Psoas muscle (tissue), 8 donors: ENCODE measurements at regions of chr1 and their contacts with region 1.

Region 1: GRCh38 chr1:210301615-210302000 is 27.1 kb upstream of the HHAT start:
- DNase-seq: no peak
- ATAC-seq: peak in 3 of 4 donors; percentile 60 to 72 (median 68)
- H3K4me3 ChIP-seq: no peak overlapping the region
- H3K27ac ChIP-seq: no peak overlapping the region
- H3K4me1 ChIP-seq: peaks cover 16% of the 10 kb centered on the region
- H3K27me3 ChIP-seq: no peaks in the 10 kb centered on the region
- CTCF ChIP-seq: no peak

Region 2: DNA sequence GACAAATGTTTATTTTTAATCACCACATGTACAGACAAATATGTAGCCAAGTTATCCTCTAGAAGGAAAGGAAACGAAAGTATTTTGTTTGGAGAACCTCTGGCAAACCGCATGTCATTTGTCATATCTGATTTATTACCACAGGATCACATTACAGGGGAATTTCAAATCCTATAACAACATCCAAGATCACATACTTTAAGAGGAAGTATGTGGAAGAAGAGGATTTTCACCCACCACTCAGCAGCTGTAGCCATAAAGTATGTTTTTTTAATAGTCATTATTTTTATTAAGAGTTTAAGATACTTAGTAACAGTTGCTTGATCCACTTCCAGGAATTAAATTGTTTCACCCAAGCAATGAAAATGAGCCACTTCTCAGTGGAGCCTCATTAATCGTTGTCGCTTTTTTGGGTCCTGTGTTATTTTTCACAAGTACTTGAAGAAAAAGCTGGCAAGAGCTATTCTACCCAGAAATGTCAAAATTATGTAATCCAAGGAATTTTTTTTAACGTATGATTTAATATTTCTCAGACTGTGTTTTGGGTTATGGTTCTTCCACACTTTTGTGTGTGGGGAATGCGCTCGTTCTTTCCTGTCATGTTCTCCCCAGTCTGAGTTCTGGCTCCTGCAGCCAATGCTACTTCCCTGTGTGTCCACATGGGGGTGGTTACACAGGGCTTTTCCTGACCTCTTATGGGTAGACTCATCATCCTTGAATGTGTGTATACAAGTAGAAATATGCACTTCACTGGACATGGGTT is 62.1 kb before region 1 on chr1:
- intact Hi-C with region 1: loop called in 1 of 2 experiments (anchors 5 kb)
- DNase-seq: no peak
- ATAC-seq: peak in 1 of 4 donors; percentile 63
- H3K4me3 ChIP-seq: no peak overlapping the region
- H3K27ac ChIP-seq: no peak overlapping the region
- H3K4me1 ChIP-seq: no peaks in the 10 kb centered on the region
- H3K27me3 ChIP-seq: peaks cover 0 to 33% (median 4%) of the 10 kb centered on the region in 3 donors
- CTCF ChIP-seq: peak; percentile 38

Region 3: DNA sequence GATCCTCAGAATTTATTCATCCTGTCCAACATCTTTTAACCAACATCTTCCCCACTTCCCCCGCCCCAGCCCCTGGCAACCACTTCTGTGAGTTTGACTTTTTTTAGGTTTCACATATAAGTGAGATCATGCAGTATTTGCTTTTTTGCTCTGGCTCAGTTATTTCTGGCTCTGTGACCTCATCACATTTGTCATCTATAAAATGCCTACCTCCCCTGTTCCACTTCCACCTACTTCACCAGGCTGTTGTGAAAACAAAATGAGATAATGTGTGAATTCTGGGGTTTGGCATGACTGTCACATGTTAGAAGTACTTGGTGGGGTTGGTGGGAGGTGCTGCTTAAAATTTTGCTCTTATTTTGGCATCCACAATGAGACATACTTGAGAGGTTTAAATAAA is 45.5 kb after region 1 on chr1:
- intact Hi-C with region 1: no loop called
- DNase-seq: no peak
- ATAC-seq: no peak
- H3K4me3 ChIP-seq: no peak overlapping the region
- H3K27ac ChIP-seq: no peak overlapping the region
- H3K4me1 ChIP-seq: no peaks in the 10 kb centered on the region
- H3K27me3 ChIP-seq: no peaks in the 10 kb centered on the region
- CTCF ChIP-seq: no peak